Gastrocnemius medialis (tissue), 4 donors: ENCODE measurements at regions of chr2 and their contacts with region 1.

Region 1: GRCh38 chr2:101151141-101151858 is at the start of gene TBC1D8:
- DNase-seq: peak; percentile 79 to 90
- ATAC-seq: peak; percentile 58 to 60
- H3K4me3 ChIP-seq: peak within 1 kb of the TSS; percentile 67 to 99 (median 95)
- H3K27ac ChIP-seq: peak within 1 kb of the TSS; percentile 84 to 97 (median 94)
- H3K4me1 ChIP-seq: peaks cover 55 to 58% of the 10 kb centered on the region in 2 donors
- H3K27me3 ChIP-seq: no peaks in the 10 kb centered on the region
- CTCF ChIP-seq: peak in 1 of 5 experiments; percentile 6
- POLR2A ChIP-seq: peak; percentile 96 to 97
- total RNA-seq, gene TBC1D8: 103 to 298 (median 201) TPM

Region 2: DNA sequence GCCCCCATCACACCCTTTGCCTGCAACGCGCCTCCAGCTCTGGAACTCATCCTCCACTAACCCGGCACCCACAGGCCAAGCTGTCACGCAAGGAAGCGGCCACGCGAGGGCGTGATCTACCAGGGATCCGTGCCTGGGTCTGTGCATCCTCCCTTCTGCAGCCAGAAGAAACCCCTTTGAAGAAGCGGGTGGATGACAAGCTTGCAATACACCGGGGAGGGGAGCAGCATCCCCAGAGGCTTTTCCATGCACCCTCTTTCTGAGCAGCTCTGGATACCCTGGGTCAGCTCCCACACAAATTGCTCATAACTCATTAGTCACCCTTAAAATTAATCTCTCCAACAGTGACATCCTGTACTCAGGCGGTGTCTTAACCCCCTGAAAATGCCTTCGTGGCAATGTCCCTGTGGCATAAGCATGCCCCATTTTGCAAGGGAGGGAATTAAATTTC is 540.9 kb before region 1 on chr2:
- in situ Hi-C with region 1: loop called in 2 of 4 experiments (anchors 10 to 25 kb)
- intact Hi-C with region 1: loop called (anchors 5 kb)
- DNase-seq: peak; percentile 26 to 38
- ATAC-seq: peak; percentile 46 to 47
- H3K4me3 ChIP-seq: no peak overlapping the region
- H3K27ac ChIP-seq: no peak overlapping the region
- H3K4me1 ChIP-seq: peaks cover 0 to 6% of the 10 kb centered on the region in 2 donors
- H3K27me3 ChIP-seq: no peaks in the 10 kb centered on the region
- CTCF ChIP-seq: peak in 4 of 5 experiments; percentile 34 to 55 (median 50)
- POLR2A ChIP-seq: no peak

Region 3: DNA sequence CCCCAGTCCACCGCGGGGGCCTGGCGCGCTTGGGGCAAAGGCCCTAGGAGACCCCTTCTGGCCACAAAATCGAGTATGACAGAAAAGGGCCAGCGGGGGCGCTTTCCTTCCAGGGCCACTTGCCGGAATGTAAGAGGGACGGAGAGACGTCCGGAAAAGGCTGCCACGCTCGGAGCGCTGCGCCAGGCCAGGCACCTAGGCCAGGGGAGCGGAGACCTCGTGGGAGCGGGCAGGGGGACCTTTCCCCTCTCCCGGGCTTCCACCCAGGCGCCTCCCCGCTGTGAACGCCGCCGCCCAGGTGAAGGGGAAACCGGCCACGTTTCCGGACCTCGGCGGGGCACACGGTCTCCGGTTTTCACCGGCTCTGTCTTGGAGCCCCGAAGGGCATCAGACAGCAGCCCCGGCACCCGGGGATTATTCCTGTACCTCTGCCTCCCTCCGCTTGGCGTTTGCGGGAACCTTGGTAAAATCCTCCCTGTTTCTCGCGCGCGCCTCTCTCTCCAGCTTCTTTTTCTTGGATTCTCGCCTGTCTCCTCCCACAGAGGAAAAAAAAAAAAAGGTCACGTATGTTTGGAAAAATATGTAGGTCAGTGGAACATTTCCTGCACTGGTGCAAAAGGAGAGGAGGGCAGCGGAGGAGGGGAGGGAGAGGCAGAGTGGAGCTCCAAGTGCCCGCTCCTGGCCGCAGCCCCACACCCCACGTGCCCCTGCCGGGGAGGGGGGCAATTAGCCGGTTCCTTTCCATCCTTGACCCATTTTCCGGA is 332.5 kb before region 1 on chr2:
- in situ Hi-C with region 1: no loop called
- intact Hi-C with region 1: loop called (anchors 2 kb)
- DNase-seq: peak; percentile 86 to 88
- ATAC-seq: peak; percentile 59 to 64
- H3K4me3 ChIP-seq: peak overlapping the region; percentile 68 to 82 (median 70)
- H3K27ac ChIP-seq: peak overlapping the region; percentile 76 to 92 (median 88)
- H3K4me1 ChIP-seq: peaks cover 26 to 33% of the 10 kb centered on the region in 2 donors
- H3K27me3 ChIP-seq: no peaks in the 10 kb centered on the region
- CTCF ChIP-seq: peak in 2 of 5 experiments; percentile 11 to 30
- POLR2A ChIP-seq: peak; percentile 56 to 58

Region 4: DNA sequence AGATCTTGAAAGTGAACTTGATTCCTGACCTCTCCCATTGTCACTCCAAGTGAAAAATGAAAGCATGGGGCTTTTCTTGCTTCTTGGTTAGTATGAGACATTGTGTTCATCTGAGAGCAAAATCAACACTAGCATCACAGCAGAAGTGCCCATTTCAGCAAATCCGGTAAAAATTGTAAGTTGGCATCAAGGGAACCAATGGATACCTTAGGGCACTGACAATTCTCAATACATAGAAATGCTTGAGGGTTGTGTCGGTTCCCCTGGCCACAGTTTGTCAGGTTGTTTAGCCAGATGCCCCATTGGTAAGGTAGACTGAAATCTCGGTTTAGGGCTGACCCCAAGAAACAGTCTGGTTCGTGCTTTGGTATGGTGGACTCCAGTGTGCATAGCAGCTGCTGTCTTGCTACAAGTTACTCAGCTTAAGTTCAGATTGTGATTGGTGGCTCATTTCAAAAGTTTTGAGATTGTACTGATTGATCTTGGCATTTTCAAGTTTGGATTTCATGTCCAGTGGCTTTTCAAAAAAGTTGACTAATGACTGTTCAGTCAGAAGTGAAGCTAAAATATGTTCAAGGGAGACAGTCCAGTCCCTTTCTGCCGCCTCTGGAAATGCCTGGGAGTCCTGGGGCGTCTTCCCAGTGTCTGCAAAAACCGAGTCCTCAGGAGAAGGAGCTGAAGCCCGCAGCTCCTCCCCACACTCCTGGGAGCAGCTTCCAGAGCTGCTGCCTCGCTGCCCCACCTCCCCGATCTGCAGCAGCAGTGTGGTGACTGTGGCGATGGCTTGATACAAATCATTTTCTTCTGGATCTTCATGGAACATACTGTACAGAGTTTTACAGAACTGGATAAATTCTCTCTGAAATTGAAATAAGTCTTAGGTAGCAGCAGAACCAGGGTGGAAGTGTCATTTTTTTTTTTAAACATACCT is 143.6 kb before region 1 on chr2:
- in situ Hi-C with region 1: loop called (anchors 5 to 10 kb)
- intact Hi-C with region 1: loop called (anchors 1 kb)
- DNase-seq: no peak
- ATAC-seq: no peak
- H3K4me3 ChIP-seq: no peak overlapping the region
- H3K27ac ChIP-seq: peak overlapping the region; percentile 57 to 69 (median 62)
- H3K4me1 ChIP-seq: peaks cover 17 to 26% of the 10 kb centered on the region in 2 donors
- H3K27me3 ChIP-seq: no peaks in the 10 kb centered on the region
- CTCF ChIP-seq: no peak
- POLR2A ChIP-seq: no peak

Region 5: DNA sequence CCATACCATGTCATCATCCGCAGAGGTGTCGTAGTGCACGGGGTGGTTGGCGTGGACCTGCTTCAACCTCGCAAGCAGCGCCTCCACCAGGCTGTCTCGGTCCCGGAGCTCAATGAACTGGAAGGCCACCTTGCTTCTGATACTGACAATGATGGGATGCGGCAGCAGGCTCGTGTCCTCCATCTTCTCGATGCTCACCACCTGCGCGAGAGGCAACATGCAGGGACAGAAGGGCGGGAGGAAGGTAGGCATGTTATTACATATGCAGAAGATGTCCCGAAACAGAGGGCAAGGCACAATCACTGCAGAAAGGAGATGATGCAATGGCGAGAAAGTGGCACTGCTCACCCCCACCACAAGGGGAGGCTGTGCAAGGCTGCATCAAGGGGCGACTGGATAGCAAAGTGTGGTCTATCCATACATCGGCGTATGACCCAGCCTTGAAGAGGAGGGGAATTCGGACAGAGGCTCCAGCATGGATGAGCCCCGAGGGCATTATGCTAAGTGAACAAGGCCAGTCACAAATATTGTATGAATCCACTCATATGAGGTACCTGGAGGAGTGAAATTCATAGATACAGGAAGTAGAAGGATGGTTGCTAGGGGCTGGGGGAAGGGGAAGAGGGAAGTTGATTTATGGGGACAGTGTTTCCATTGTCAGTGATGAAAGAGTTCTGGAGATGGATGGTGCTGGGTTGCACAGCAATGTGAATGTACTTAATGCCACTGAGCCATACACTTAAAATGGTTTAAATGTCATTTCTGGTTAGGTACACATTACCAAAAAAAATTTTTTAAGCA is 112.6 kb before region 1 on chr2:
- in situ Hi-C with region 1: no loop called
- intact Hi-C with region 1: loop called (anchors 2 kb)
- DNase-seq: no peak
- ATAC-seq: peak in 1 of 2 donors; percentile 53
- H3K4me3 ChIP-seq: no peak overlapping the region
- H3K27ac ChIP-seq: peak overlapping the region in 2 of 4 donors; percentile 27 to 43
- H3K4me1 ChIP-seq: peaks cover 0 to 4% of the 10 kb centered on the region in 2 donors
- H3K27me3 ChIP-seq: no peaks in the 10 kb centered on the region
- CTCF ChIP-seq: peak; percentile 36 to 76 (median 67)
- POLR2A ChIP-seq: no peak

Region 6: DNA sequence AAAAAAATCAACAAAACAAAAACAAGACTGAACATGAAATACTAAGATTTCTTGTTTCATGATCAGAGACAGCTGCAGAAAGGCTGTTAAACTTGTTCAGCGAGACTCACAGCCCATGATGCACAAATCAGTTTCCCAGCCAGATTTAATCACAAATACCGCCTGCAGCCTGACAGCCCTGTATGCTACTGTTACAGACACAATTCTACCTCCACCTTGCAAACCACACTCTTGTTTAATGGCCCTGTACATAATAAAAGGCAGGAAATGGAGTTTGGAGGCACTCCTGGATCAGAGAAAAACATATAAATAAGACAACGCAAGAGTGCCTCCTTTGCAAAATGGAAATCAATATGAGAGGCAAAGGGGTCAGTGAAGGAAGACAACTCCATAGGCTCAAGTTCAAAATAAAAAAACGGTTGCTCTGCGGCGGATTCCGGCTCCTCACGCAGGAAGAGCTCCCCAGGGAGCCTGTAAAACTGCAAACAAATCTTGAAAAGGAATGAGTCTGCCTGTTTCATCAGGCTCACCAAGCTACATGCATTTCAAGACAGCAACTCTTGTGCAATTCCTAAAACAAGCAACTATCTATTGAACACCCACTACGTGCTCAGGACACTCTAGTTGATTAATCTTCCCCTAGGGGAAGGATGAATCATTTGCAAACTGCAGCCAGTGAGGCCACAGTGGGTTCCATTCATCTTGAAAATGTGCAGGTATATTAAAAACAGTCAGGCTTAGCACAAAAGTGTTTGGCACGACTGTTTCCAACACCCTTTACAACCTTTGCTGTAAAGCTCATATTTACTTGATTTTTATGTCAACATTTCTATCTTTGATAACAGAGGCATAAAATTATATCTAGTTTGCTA is 37.7 kb before region 1 on chr2:
- in situ Hi-C with region 1: no loop called
- intact Hi-C with region 1: loop called (anchors 5 kb)
- DNase-seq: peak in 1 of 2 donors; percentile 47
- ATAC-seq: peak; percentile 22 to 25
- H3K4me3 ChIP-seq: peak overlapping the region in 3 of 4 donors; percentile 4 to 19 (median 9)
- H3K27ac ChIP-seq: peak overlapping the region; percentile 84 to 100 (median 99)
- H3K4me1 ChIP-seq: peaks cover 78 to 96% of the 10 kb centered on the region in 2 donors
- H3K27me3 ChIP-seq: no peaks in the 10 kb centered on the region
- CTCF ChIP-seq: peak in 2 of 5 experiments; percentile 10 to 20
- POLR2A ChIP-seq: peak in 1 of 2 donors; percentile 79